CD8-positive, alpha-beta T cell (primary cell): ENCODE measurements at regions of chr6 and their contacts with region 1.

Region 1: DNA sequence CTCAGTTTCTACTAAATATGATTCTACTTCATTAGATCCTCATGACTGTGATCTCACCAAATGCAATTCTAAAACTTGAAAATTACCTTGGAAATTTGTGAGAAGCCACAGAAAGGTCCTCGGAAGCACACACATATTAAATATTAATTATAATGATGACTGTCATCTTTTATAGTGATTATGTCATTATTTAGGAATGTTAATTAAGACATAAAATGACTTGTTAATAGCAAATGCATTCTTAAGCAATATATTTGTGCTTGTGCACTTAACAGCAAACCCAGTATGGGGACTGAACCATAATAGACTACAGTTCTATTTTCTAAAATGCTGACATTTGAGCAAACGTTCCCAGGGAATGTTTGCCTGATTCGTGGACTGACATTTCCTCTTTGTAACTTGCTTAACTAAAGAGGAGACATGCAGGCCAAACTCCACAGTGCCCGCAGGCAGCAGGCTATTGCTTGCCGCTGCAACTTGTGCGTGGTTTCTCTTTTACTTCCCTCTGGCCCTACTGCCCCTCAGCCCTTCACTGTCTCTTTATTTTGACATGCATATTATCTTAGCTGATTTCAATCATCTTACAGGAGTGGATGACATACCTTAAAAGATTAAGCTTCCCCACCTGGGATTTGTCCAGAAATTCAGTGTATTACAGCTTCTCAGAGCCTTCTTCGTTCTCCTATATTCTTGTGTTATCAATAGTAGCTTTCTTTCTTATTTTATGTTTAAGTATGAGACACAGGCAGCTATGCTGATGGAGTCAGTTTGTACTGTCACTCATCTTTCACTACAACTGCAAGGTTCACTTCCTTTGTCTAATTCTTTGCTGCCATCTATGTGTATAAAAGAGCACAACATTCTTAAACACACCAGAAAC is 141.5 kb downstream of the GMDS start:
- DNase-seq: peak in 2 of 9 experiments; percentile 37 to 53
- ATAC-seq: peak; percentile 48
- H3K4me3 ChIP-seq: no peak overlapping the region
- H3K4me3 Mint-ChIP-seq: no peak overlapping the region
- H3K27ac ChIP-seq: no peak overlapping the region
- H3K27ac Mint-ChIP-seq: no peak overlapping the region
- H3K4me1 ChIP-seq: no peaks in the 10 kb centered on the region
- H3K4me1 Mint-ChIP-seq: no peaks in the 10 kb centered on the region
- H3K27me3 ChIP-seq: peaks cover 0 to 2% of the 10 kb centered on the region in 2 experiments
- H3K27me3 Mint-ChIP-seq: no peaks in the 10 kb centered on the region
- CTCF ChIP-seq: peak; percentile 44

Region 2: DNA sequence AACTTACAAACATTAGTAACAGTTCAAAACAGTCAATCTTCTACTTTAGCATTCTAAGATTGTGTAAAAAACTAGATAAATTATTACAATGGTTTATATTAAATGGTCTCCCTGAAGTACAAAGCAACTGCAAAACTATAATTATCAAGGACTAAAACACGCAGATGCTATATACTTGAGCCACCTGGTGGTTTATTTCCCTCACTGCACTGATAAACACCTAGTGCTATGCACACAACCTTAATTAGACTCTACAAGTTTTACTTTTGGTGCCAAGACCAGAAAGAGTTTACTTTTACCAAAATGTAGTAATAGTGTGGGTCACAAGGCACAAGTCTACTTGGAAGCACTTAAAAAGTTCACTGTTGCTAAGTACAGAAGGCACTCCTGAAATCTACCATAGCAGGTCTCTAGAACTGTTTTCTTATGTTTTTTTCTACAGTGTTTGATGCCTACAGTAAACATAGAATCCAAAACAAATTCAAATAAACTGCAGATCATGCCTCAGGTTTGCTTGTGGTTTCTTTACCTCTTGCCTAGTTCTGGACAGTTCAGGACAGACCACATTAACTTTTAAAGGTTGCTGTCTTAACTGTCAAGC is 92.3 kb after region 1 on chr6:
- CTCF ChIA-PET with region 1: interaction called, 5 read pairs
- POLR2A ChIA-PET with region 1: no interaction called
- intact Hi-C with region 1: loop called (anchors 1 to 5 kb)
- DNase-seq: peak in 4 of 9 experiments; percentile 26 to 68 (median 51)
- ATAC-seq: peak; percentile 72
- H3K4me3 ChIP-seq: no peak overlapping the region
- H3K4me3 Mint-ChIP-seq: no peak overlapping the region
- H3K27ac ChIP-seq: no peak overlapping the region
- H3K27ac Mint-ChIP-seq: no peak overlapping the region
- H3K4me1 ChIP-seq: no peaks in the 10 kb centered on the region
- H3K4me1 Mint-ChIP-seq: peaks cover 3% of the 10 kb centered on the region
- H3K27me3 ChIP-seq: no peaks in the 10 kb centered on the region
- H3K27me3 Mint-ChIP-seq: no peaks in the 10 kb centered on the region
- CTCF ChIP-seq: peak; percentile 86

Region 3: GRCh38 chr6:2353412-2354137 is 249.7 kb after region 1 on chr6:
- CTCF ChIA-PET with region 1: interaction called, 3 read pairs
- POLR2A ChIA-PET with region 1: no interaction called
- intact Hi-C with region 1: loop called (anchors 5 to 10 kb)
- DNase-seq: peak; percentile 10 to 62 (median 48)
- ATAC-seq: no peak
- H3K4me3 ChIP-seq: no peak overlapping the region
- H3K4me3 Mint-ChIP-seq: no peak overlapping the region
- H3K27ac ChIP-seq: no peak overlapping the region
- H3K27ac Mint-ChIP-seq: no peak overlapping the region
- H3K4me1 ChIP-seq: no peaks in the 10 kb centered on the region
- H3K4me1 Mint-ChIP-seq: no peaks in the 10 kb centered on the region
- H3K27me3 ChIP-seq: no peaks in the 10 kb centered on the region
- H3K27me3 Mint-ChIP-seq: no peaks in the 10 kb centered on the region
- CTCF ChIP-seq: peak; percentile 75